Psoas muscle (tissue), 8 donors: ENCODE measurements at regions of chr2 and their contacts with region 1.

Region 1: GRCh38 chr2:170815746-170816503 is 762 bp upstream of the GAD1 start:
- DNase-seq: peak; percentile 51 to 67
- ATAC-seq: peak; percentile 65 to 79 (median 74)
- H3K4me3 ChIP-seq: peak overlapping the region; percentile 66
- H3K27ac ChIP-seq: no peak overlapping the region
- H3K4me1 ChIP-seq: peaks cover 43% of the 10 kb centered on the region
- H3K27me3 ChIP-seq: peaks cover 3 to 84% (median 46%) of the 10 kb centered on the region in 3 donors
- CTCF ChIP-seq: peak; percentile 68

Region 2: GRCh38 chr2:170235860-170236679 is 579.9 kb before region 1 on chr2:
- intact Hi-C with region 1: loop called in 1 of 2 experiments (anchors 5 kb)
- DNase-seq: peak in 1 of 2 donors; percentile 23
- ATAC-seq: peak in 1 of 4 donors; percentile 51
- H3K4me3 ChIP-seq: no peak overlapping the region
- H3K27ac ChIP-seq: no peak overlapping the region
- H3K4me1 ChIP-seq: no peaks in the 10 kb centered on the region
- H3K27me3 ChIP-seq: no peaks in the 10 kb centered on the region
- CTCF ChIP-seq: no peak

Region 3: GRCh38 chr2:170360546-170361089 is 455.3 kb before region 1 on chr2:
- intact Hi-C with region 1: loop called in 1 of 2 experiments (anchors 1 kb)
- DNase-seq: no peak
- ATAC-seq: no peak
- H3K4me3 ChIP-seq: no peak overlapping the region
- H3K27ac ChIP-seq: no peak overlapping the region
- H3K4me1 ChIP-seq: no peaks in the 10 kb centered on the region
- H3K27me3 ChIP-seq: peaks cover 0 to 21% (median 0%) of the 10 kb centered on the region in 3 donors
- CTCF ChIP-seq: no peak

Region 4: DNA sequence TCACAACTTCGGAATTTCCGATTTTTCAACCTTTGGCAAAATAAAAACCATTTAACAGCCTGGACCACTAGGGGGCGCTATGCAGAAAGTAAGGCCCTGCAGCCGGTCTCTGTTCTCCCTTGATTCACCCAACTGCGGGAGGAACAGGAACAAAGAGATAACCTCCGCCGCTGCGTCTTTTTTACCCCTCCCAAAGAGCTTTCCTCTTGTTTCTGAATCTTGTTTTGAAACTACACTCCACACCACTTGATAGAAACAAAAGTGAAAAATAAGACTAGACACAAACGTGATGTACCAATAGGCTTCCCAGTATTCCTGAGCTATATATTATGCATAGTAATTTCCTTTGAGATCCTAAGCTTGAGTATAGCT is 406.8 kb before region 1 on chr2:
- intact Hi-C with region 1: loop called (anchors 2 to 10 kb)
- DNase-seq: peak; percentile 43 to 66
- ATAC-seq: peak in 2 of 4 donors; percentile 49 to 63
- H3K4me3 ChIP-seq: no peak overlapping the region
- H3K27ac ChIP-seq: no peak overlapping the region
- H3K4me1 ChIP-seq: no peaks in the 10 kb centered on the region
- H3K27me3 ChIP-seq: no peaks in the 10 kb centered on the region
- CTCF ChIP-seq: peak; percentile 87

Region 5: DNA sequence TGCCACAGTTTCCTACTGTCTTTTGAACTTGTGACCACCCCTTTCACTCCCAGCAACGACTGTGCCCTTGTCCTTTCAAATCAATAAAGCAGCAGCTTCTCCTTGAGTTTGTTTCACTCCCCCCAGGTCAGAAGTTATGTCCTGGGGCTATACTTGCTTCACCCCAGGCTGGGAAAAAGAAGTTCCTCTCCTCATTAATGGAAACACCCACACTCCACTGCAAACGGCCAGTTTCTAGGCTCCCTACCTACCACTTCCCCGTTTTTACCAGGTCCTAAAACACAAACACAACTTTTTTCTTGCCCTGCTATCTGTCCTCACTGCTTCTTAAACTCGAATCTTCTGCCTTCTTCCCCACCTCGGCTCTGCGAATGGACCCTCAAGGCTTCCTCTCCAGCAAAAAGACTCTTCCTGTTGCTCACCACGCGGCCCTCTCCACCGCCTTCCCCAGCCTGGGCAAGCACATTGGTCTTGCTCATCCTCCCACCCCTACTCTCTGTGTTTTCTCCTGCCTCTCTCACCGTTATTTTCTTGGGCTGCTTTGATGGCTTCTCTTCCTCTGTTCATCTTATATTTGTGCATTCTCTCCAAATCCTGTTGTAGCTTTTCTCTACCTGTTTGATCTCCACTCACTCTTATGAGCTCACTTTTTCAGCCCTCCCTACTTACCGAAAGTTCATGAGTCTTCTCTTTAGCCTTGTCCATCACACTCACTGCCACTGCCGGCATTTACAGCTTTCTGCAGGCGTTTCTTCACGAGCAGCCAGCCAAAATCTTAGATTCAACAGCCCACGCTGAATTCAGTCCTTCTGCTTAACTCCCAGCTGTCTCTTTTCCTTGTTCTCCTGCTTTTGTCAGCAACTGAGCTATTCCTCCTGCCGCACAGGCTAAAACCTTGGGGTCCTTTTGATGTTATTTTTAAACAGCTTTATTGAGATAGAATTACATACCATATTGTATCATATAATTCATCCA is 107.8 kb before region 1 on chr2:
- intact Hi-C with region 1: loop called in 1 of 2 experiments (anchors 10 kb)
- DNase-seq: no peak
- ATAC-seq: no peak
- H3K4me3 ChIP-seq: no peak overlapping the region
- H3K27ac ChIP-seq: no peak overlapping the region
- H3K4me1 ChIP-seq: no peaks in the 10 kb centered on the region
- H3K27me3 ChIP-seq: peaks cover 0 to 48% (median 9%) of the 10 kb centered on the region in 3 donors
- CTCF ChIP-seq: no peak